ENCODE measurements at regions of chr2 and their contacts with region 1.

Region 1: GRCh38 chr2:98731041-98731893 is at the start of gene MGAT4A:
- DNase-seq: peak; percentile 70 to 97 (median 80)

Region 2: DNA sequence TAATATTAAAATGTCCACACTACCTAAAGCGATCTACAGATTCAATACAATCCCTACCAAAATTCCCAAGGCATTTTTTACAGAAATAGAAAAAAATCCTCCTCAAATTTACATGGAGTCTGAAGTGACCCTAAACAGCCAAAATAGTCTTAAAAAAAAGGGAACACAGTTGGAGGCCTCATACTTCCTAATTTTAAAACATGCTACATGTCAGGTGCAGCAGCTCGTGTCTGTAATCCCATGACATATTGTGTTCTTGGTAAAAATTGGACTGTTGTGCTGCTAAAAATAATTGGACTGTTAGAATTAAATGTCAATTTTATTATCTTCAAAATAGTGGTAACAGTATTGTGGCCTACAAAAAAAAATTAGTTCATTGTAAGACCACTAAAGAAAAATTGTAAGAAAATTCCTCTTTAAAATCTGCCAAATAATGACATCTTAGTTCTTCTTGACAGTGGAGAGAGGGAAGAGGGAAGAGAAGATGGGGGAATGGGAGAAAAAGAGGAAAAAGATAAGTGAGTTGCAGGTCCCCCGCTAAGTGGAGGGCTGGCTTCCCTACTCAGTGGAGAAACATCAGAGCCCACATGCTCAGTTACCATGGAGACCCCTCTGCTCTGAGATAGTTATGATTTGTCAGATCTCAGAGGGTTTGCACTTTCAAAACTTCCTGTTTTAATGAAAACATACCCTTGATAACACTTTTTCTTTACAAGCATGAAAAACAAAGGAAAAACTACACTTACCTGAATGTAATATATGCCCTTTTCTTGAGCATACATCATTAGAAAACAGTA is 76.4 kb before region 1 on chr2:
- intact Hi-C with region 1: loop called (anchors 5 kb)
- DNase-seq: no peak

Region 3: DNA sequence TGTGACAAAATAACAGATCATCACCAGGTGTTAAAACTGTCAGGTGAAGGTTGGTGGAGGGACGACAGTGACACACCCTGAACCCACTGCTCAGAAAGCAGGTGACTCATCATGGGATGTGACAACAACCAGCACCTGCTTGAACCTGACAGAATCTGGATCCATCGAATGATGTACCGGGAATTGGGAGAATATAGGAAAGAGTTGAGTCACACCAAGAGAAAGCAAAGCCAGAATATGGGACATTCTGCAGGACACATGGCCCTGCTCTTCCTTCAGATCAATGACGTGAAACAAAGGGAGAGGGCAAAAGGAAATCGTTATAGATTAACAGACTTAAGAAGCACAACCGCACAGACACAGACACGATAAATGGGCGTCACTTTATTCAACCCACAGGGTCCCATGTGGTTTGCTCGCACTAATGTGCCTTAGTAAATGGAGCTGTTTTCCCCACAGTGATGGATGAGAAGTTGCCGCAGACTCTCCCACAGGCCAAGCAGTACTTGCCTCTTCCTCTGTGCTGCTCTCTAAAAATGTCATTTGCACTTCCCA is 104.6 kb after region 1 on chr2:
- intact Hi-C with region 1: loop called (anchors 5 kb)
- DNase-seq: no peak